Activated CD4-positive, alpha-beta T cell treated with anti-CD3 and anti-CD28 coated beads, Interleukin-2, amount 10 ng/mL, durations not matched to agents 24 days and 14 days (primary cell): ENCODE measurements at regions of chr12 and their contacts with region 1.

Region 1: DNA sequence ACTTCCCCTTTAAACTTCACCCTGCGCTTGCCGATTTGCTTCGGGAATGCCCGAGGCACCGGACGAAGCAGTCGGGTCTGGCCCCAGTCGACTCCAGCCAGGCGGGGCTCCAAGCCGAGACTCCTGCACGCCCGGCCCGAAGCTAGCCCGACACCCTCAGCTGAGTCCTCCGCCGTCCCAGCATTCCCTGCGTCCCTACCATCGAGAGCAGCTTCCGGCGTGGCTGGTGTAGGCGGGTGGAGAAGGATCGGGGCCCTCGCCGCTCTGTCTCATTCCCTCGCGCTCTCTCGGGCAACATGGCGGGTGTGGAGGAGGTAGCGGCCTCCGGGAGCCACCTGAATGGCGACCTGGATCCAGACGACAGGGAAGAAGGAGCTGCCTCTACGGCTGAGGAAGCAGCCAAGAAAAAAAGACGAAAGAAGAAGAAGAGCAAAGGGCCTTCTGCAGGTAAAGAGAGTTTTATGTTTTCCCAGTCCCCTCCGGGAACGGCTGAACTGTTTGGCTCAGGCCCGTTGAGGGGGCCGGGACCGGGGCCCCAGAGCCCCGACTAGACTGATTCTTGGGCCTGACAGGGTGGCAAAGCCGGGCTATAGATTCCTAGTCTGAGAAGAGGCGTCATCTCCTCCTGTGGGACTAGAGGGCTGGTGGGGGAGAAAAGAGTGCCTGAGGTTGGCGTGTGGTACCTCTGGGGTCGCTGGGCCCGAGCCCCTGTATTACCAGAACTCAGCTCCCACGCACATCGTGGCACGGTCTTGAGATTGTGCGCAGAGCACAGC is at the start of gene METAP2:
- DNase-seq: peak; percentile 97
- H3K4me3 Mint-ChIP-seq: peak within 1 kb of the TSS; percentile 94
- H3K27ac Mint-ChIP-seq: peak within 1 kb of the TSS; percentile 100
- H3K4me1 Mint-ChIP-seq: peaks cover 32% of the 10 kb centered on the region
- H3K27me3 Mint-ChIP-seq: no peaks in the 10 kb centered on the region
- total RNA-seq, gene METAP2: 125 and 133 TPM in 2 replicates

Region 2: GRCh38 chr12:95548539-95549391 is 74.7 kb after region 1 on chr12:
- intact Hi-C with region 1: loop called (anchors 2 kb)
- DNase-seq: peak; percentile 90
- H3K4me3 Mint-ChIP-seq: peak overlapping the region; percentile 89
- H3K27ac Mint-ChIP-seq: peak overlapping the region; percentile 79
- H3K4me1 Mint-ChIP-seq: peaks cover 44% of the 10 kb centered on the region
- H3K27me3 Mint-ChIP-seq: peaks cover 23% of the 10 kb centered on the region